Transverse colon (tissue), 4 donors: ENCODE measurements at regions of chr6 and their contacts with region 1.

Region 1: DNA sequence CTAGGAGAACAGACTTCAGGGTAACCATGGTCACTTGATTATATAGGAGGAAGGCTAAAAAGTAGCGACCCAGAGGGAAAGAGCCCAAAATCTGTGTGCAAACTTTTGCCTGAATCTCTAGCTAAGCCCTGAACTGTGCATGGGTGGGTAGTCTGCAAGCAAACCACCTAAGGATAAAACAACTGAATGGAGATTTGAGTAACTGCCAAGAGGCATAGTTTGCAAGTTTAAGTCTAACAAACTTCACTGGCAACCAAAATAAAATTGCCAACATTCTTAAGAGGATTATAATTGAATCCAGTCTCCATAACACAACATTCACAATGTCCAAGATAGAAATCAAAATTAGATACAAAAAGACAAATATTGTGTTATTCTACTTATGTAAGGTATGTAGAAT is 192.0 kb upstream of the PLN start:
- DNase-seq: no peak
- H3K4me3 ChIP-seq: no peak overlapping the region
- H3K27ac ChIP-seq: no peak overlapping the region
- H3K4me1 ChIP-seq: no peaks in the 10 kb centered on the region
- H3K27me3 ChIP-seq: no peaks in the 10 kb centered on the region
- CTCF ChIP-seq: no peak
- EP300 ChIP-seq: no peak
- POLR2A ChIP-seq: no peak

Region 2: GRCh38 chr6:117167520-117168271 is 1188.4 kb before region 1 on chr6:
- in situ Hi-C with region 1: no loop called
- intact Hi-C with region 1: loop called (anchors 5 kb)
- DNase-seq: no peak
- H3K4me3 ChIP-seq: no peak overlapping the region
- H3K27ac ChIP-seq: no peak overlapping the region
- H3K4me1 ChIP-seq: no peaks in the 10 kb centered on the region
- H3K27me3 ChIP-seq: no peaks in the 10 kb centered on the region
- CTCF ChIP-seq: no peak
- EP300 ChIP-seq: no peak
- POLR2A ChIP-seq: no peak

Region 3: DNA sequence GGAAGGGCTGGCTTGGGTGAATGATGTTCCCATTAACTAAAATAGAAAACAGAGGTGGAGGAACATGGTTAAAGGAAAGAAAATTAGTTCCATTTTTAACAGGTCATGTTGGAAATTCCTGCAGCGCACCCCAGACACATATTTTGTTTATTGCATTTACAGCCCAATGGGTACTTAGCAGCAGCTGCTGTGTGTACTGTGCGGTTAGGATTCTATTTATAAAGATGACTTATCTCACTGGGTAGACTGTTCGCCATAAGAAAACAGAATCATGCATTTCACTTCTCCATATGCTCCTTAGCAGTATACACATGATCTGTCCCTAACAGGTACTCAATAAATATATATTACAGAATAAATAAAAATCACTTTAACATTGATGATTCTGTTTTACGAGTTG is 313.2 kb before region 1 on chr6:
- in situ Hi-C with region 1: no loop called
- intact Hi-C with region 1: no loop called
- DNase-seq: no peak
- H3K4me3 ChIP-seq: no peak overlapping the region
- H3K27ac ChIP-seq: no peak overlapping the region
- H3K4me1 ChIP-seq: no peaks in the 10 kb centered on the region
- H3K27me3 ChIP-seq: no peaks in the 10 kb centered on the region
- CTCF ChIP-seq: no peak
- EP300 ChIP-seq: no peak
- POLR2A ChIP-seq: no peak